GM10248 (cell line): ENCODE measurements at regions of chr17 and their contacts with region 1.

Region 1: DNA sequence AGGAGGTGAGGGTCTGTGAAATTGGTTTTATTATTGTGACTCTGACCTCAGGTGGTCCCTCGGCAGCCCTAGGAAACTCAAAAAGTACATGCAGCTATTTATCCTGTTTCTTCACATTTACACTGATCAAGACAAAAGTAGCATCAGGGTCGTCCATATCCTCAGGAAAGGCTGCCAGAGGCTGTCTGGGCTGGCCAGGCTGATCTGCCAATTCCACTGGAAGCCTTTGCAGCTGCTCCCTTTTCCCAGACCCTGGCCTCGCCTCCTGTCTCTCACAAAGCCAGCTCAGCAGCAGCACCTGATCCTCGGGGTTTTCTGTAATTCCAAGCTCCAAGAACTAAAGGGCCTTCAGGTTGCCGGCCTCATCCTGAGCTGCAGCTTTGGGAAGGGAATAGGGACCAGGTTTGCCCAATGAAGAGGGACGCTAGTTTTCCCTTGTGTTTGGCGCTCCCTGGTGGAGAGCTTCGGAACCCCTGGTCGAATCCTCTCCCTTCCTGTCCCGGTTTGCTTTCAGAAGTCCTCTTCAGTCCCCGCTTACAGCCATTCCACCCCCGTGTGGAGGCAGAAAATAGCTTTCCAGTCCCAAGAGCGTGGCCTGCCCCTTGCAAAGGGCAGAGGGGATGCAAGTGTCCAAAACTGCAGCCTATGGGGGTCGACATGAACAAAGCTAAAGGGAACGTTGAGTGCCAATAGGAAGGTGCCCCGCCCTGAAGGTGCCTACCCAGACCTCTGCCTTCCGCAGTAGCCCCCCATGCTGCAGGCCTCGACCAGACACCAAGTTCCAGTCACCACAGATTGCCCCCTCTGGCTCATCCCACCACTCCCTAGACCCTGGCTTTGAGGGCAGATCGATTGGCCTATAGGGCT is 13.4 kb downstream of the MFSD6L start:
- DNase-seq: peak; percentile 72
- CTCF ChIP-seq: peak; percentile 68

Region 2: GRCh38 chr17:8409966-8410864 is 375.6 kb before region 1 on chr17:
- CTCF ChIA-PET with region 1: interaction called, 23 read pairs
- POLR2A ChIA-PET with region 1: no interaction called
- DNase-seq: peak; percentile 71
- CTCF ChIP-seq: peak; percentile 76

Region 3: DNA sequence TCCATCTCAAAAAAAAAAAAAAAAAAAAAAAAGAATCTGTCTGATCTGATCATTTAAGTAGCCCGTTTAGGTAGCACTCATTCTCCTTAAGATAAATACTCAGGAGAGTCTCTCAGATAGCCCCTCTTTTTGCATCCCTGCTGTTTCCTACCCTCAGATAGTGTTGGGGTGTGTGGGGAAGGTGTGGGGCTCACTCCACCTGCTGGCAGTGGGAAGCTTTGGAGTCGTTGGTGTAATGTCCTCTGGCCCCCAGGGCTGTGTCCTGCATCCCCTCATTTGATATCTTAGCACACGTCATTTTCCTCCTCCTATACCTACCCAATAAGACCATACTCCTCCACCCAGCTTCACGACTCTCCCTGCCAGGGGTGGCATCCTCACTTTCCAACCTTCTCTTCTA is 134.8 kb before region 1 on chr17:
- CTCF ChIA-PET with region 1: no interaction called
- POLR2A ChIA-PET with region 1: no interaction called
- DNase-seq: no peak
- CTCF ChIP-seq: peak; percentile 25

Region 4: GRCh38 chr17:8753976-8754440 is 31.8 kb before region 1 on chr17:
- CTCF ChIA-PET with region 1: interaction called, 45 read pairs
- POLR2A ChIA-PET with region 1: no interaction called
- DNase-seq: peak; percentile 68
- CTCF ChIP-seq: peak; percentile 57

Region 5: DNA sequence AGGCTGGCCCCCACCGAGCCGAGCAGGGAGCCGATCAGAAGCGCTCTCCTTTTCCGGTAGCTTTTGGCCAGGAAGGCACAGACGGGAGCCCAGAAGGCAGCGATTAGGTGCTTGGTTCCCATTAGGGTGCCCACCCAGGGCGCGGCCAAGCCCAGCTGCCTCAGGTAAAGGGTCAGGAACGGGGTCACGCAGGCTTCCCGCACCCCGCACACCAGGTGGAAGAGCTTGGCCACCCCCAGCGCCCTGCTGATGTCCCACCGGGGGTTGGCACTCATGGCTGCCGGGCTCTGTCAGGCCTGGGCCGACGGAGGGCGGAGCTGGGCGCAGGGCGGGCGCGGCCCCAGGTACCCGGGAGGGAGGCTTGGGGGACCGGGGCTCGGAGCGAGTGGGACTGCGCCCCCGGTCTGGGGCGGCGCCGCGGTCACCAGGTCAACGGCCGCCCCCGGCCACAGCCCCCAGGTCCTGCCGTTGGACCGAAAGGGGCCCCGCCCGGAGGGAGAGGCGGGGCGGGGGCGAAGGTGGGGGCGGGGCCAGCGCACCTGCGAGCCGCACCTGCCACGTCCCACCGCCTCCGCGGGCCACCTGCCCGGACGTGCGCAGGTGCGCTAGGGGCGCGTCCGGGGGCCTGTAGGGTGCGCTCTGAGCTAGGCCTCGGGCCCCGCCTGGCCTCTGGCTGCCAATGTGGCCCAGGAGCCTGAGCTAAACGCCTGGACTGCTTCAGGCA is 13.2 kb after region 1 on chr17 and contains the start of gene MFSD6L:
- CTCF ChIA-PET with region 1: interaction called, 21 read pairs
- POLR2A ChIA-PET with region 1: interaction called, 7 read pairs
- DNase-seq: no peak
- CTCF ChIP-seq: peak; percentile 20

Region 6: GRCh38 chr17:8825802-8826201 is 40.0 kb after region 1 on chr17:
- CTCF ChIA-PET with region 1: interaction called, 12 read pairs
- POLR2A ChIA-PET with region 1: no interaction called
- DNase-seq: no peak
- CTCF ChIP-seq: no peak

Region 7: DNA sequence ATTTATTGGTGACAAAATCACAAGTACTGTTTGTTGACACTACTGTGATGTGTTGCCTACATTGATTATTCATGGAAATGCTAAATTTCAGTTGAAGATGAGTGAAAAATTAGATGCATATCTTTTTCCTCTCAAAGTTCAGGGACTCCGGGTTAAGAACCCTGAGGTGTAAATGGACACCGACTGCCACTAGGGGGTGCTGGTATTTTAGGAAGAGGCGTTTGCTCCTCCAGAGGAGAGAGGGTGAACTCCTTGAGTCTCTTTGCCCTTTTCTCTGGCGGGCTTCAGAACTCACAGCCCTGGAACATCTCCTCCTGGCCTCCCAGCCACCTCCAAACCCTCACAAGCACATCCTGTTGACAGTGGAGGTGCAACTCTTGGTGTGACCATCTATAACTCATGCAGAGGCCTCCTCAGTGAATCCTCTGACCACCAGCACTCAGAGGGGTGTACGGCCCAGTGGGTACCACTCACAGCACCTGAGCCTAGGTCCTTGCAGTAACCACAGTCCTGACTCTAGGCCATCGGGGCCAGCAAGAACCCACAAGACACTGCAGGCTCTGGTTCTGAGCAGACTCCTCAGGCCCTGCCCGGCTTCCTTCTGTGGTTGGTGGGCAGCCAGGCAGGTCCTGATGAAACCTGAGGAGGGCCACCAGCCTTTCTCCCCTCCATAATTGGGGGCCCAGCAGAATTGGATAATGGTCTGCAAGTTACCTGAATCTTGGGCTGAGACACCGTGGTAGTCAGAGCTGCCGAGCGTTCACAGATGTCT is 205.9 kb after region 1 on chr17:
- CTCF ChIA-PET with region 1: interaction called, 10 read pairs
- POLR2A ChIA-PET with region 1: no interaction called
- DNase-seq: peak; percentile 64
- CTCF ChIP-seq: peak; percentile 50